HEK293T (cell line): ENCODE measurements at regions of chr15 and their contacts with region 1.

Region 1: DNA sequence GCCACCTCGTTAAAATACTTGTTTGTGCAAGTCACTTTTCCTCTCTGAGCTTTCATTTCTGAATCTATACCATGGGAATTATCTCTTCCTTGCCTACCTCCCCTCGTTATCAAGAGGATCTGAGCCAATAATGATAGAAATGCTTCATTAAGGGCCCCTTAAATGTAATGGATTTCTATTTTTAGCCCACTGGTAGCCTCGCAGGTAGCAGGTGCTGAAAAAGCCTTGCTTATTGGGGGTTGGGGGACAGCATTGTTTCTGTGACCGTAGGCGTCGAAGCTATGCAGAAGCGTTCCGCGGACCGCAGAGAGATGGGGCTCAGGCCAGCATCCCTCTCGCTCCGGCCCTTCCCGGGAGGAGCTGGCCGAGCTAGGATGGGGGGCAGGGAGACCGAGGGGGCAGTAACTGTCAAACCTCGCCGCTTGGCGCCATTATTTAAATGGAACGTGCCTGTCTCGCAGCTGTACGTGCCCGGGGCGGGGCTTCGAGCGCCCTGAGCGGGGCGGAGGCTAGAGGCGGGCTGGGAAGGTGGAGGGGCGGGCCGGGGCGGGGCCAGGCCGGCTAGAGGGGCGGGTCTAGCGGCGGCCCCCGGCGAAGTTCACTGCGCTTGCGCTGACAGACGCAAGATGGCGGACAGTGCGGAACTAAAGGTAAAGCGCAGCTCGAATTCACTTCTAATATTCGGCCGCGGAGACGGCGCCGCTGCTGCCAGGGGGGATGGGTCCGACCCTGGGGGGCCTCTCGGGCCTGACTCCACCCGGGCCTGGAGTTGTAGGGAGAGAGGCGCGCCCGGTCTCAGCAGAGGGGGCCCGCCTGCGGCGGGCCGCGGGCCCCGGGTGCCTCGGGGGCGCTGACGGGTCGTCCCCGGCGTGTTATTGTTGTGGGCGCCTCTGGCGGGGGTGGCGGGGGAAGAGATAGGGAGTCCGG is at the start of gene PIAS1:
- DNase-seq: peak; percentile 97

Region 2: GRCh38 chr15:67914537-67915460 is 139.2 kb before region 1 on chr15:
- CTCF ChIA-PET with region 1: interaction called, 3 read pairs
- POLR2A ChIA-PET with region 1: interaction called, 11 read pairs
- DNase-seq: no peak

Region 3: GRCh38 chr15:68080783-68081182 is 26.8 kb after region 1 on chr15:
- CTCF ChIA-PET with region 1: no interaction called
- POLR2A ChIA-PET with region 1: interaction called, 12 read pairs
- DNase-seq: no peak

Region 4: GRCh38 chr15:68114356-68114755 is 60.4 kb after region 1 on chr15:
- CTCF ChIA-PET with region 1: no interaction called
- POLR2A ChIA-PET with region 1: interaction called, 11 read pairs
- DNase-seq: no peak